ENCODE measurements at regions of chr7 and their contacts with region 1.

Region 1: GRCh38 chr7:128343554-128344430 is at the start of gene RBM28:
- DNase-seq: peak; percentile 89
- H3K4me3 ChIP-seq: peak within 1 kb of the TSS; percentile 53 to 98 (median 85)
- H3K27ac ChIP-seq: peak within 1 kb of the TSS; percentile 21
- H3K4me1 ChIP-seq: peaks cover 10% of the 10 kb centered on the region
- H3K27me3 ChIP-seq: peaks cover 2 to 4% of the 10 kb centered on the region in 2 experiments
- CTCF ChIP-seq: no peak
- POLR2A ChIP-seq: peak; percentile 93
- total RNA-seq, gene RBM28: 58.5 and 58.7 TPM in 2 replicates

Region 2: GRCh38 chr7:128366986-128367385 is 23.2 kb after region 1 on chr7:
- CTCF ChIA-PET with region 1: interaction called, 18 read pairs
- POLR2A ChIA-PET with region 1: no interaction called
- dilution Hi-C with region 1: no loop called
- intact Hi-C with region 1: no loop called
- DNase-seq: no peak
- H3K4me3 ChIP-seq: no peak overlapping the region
- H3K27ac ChIP-seq: no peak overlapping the region
- H3K4me1 ChIP-seq: no peaks in the 10 kb centered on the region
- H3K27me3 ChIP-seq: peaks cover 33 to 46% of the 10 kb centered on the region in 2 experiments
- CTCF ChIP-seq: no peak
- POLR2A ChIP-seq: no peak

Region 3: DNA sequence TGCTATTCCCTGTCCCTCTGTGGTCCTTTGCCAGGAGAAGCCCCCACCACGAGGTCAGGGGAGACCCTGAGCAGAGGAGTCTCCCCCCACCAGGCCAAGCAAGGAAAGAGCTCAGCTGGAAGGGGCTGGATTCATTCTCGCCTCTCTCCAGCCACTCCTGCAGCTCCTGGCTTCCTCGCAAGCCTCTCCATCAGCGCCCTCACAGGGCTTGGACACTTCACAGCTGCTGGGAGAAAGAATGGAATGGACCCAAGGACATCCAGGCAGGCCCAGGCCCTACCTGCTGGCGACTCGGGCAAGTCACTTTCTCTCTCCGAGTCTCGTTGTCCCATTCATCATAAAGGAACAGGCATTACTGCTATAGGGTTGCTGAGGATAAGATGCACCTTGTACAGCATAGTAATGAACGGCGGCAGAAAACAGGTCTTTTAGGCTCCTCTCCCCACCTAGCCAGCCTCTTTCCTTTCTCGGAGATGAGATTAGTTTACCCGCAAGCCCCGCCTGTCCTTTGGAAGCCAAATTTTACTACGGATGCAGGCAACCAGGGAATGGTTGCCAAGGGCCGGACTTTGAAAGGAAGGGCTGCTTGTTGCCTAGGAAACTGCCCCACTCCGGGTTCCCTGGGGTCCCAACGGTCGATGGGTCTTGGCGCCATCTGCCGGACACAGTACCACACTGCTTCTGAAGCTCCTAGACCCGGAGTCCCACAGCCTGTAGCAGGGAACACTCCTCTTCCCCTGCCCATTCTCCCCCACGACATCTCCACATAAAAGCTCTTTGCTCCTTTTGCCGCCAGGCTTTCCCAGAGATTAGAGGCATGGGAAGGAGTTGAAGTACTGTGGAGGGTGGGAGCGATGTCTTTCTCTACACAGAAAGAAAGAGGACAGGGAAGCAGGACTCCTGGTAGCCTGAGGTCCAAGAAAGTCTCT is 43.7 kb after region 1 on chr7:
- CTCF ChIA-PET with region 1: interaction called, 778 read pairs
- POLR2A ChIA-PET with region 1: interaction called, 4 read pairs
- dilution Hi-C with region 1: no loop called
- intact Hi-C with region 1: loop called (anchors 1 kb)
- DNase-seq: peak; percentile 71
- H3K4me3 ChIP-seq: no peak overlapping the region
- H3K27ac ChIP-seq: no peak overlapping the region
- H3K4me1 ChIP-seq: no peaks in the 10 kb centered on the region
- H3K27me3 ChIP-seq: peaks cover 0 to 5% of the 10 kb centered on the region in 2 experiments
- CTCF ChIP-seq: peak; percentile 75 to 92
- POLR2A ChIP-seq: no peak

Region 4: GRCh38 chr7:128437426-128438332 is 93.9 kb after region 1 on chr7:
- CTCF ChIA-PET with region 1: interaction called, 11 read pairs
- POLR2A ChIA-PET with region 1: no interaction called
- dilution Hi-C with region 1: no loop called
- intact Hi-C with region 1: no loop called
- DNase-seq: no peak
- H3K4me3 ChIP-seq: no peak overlapping the region
- H3K27ac ChIP-seq: no peak overlapping the region
- H3K4me1 ChIP-seq: no peaks in the 10 kb centered on the region
- H3K27me3 ChIP-seq: peaks cover 12% of the 10 kb centered on the region in 2 experiments
- CTCF ChIP-seq: no peak
- POLR2A ChIP-seq: no peak

Region 5: DNA sequence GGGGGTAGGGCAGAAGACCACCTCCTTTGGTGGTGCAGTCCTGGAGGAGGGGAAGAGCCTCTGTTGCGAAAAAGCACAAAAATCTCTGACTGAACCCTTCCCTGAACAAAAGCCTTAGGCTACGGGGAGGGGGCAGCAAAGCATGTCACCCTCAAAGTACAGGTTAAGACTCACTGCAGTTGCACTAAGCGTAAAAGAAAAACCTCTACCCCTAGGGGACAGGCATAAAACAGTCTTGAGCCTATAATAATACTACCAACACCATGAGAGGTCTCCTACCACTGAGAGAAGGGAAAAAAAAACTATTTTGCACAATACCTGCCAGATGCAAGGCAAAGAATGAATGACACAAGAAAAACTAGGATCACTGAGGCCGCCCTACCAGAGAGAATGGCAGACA is 693.8 kb after region 1 on chr7:
- CTCF ChIA-PET with region 1: no interaction called
- POLR2A ChIA-PET with region 1: no interaction called
- dilution Hi-C with region 1: no loop called
- intact Hi-C with region 1: no loop called
- DNase-seq: no peak
- H3K4me3 ChIP-seq: no peak overlapping the region
- H3K27ac ChIP-seq: no peak overlapping the region
- H3K4me1 ChIP-seq: peaks cover 12% of the 10 kb centered on the region
- H3K27me3 ChIP-seq: no peaks in the 10 kb centered on the region
- CTCF ChIP-seq: no peak
- POLR2A ChIP-seq: no peak